ENCODE measurements at regions of chr14 and their contacts with region 1.

Region 1: DNA sequence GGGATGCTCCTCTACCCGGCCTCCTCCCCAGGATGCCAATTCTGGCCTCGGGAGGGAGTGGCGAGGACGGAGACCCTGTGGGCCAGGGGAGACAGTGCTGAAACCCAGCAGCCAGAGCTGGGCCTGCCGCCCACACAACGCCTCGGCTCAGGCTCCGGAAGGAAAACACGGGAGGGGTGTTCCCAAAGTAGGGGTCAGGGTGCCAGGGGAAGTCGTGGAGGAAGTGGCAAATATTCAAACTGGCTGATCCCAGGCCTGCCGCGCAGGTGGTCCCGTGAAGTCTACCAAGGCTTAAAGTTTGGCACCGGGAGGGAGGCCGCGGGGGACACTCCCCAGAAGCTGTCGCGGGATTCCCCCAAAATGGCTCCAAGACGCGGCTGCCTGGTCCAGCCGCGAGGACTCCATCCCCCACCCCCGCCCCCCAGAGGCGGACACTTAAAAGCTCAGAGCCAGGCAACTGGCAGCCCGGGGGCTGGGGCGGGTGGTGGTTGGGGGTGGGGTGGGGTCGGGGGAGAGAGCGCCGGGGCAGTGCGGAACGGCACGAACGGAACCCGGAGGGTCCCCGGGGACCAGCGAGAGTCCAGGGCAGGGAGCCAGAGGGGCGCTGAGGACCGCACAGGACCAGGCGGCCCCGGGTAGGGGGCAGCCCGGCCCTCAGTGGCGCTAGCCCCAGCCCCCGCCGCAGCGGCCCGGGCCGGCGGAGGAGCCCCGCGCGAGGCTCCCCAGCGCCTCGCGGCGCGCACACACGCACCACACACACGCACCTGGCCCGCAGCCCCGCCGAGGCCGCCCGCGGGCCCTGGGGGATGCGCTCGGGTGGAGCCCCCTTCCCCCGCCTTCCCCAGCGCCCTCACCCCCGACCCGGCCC is 20.0 kb downstream of the BEGAIN start:
- DNase-seq: no peak
- ATAC-seq: no peak
- H3K4me3 ChIP-seq: peak overlapping the region; percentile 31 to 55 (median 46)
- H3K27ac ChIP-seq: no peak overlapping the region
- H3K4me1 ChIP-seq: peaks cover 0 to 5% of the 10 kb centered on the region in 2 donors
- H3K27me3 ChIP-seq: peaks cover 15 to 49% (median 32%) of the 10 kb centered on the region in 3 donors
- CTCF ChIP-seq: no peak
- POLR2A ChIP-seq: no peak

Region 2: GRCh38 chr14:100476012-100476822 is 91.0 kb before region 1 on chr14:
- in situ Hi-C with region 1: no loop called
- intact Hi-C with region 1: loop called (anchors 10 kb)
- DNase-seq: peak; percentile 28 to 57
- ATAC-seq: peak; percentile 69 to 87
- H3K4me3 ChIP-seq: no peak overlapping the region
- H3K27ac ChIP-seq: peak overlapping the region; percentile 64 to 82 (median 74)
- H3K4me1 ChIP-seq: peaks cover 16 to 22% of the 10 kb centered on the region in 2 donors
- H3K27me3 ChIP-seq: no peaks in the 10 kb centered on the region
- CTCF ChIP-seq: no peak
- POLR2A ChIP-seq: no peak

Region 3: GRCh38 chr14:100645192-100645990 is 78.1 kb after region 1 on chr14:
- in situ Hi-C with region 1: no loop called
- intact Hi-C with region 1: no loop called
- DNase-seq: peak; percentile 52 to 62
- ATAC-seq: peak; percentile 79 to 82
- H3K4me3 ChIP-seq: no peak overlapping the region
- H3K27ac ChIP-seq: no peak overlapping the region
- H3K4me1 ChIP-seq: no peaks in the 10 kb centered on the region
- H3K27me3 ChIP-seq: no peaks in the 10 kb centered on the region
- CTCF ChIP-seq: peak; percentile 51 to 74 (median 71)
- POLR2A ChIP-seq: no peak

Measured in gastrocnemius medialis (tissue), 4 donors.